Right ventricle myocardium superior (tissue), 1 donor: ENCODE measurements at regions of chr1 and their contacts with region 1.

Region 1: GRCh38 chr1:201481761-201482493 is 12.9 kb upstream of the PHLDA3 start:
- DNase-seq: peak; percentile 89
- ATAC-seq: peak; percentile 91

Region 2: DNA sequence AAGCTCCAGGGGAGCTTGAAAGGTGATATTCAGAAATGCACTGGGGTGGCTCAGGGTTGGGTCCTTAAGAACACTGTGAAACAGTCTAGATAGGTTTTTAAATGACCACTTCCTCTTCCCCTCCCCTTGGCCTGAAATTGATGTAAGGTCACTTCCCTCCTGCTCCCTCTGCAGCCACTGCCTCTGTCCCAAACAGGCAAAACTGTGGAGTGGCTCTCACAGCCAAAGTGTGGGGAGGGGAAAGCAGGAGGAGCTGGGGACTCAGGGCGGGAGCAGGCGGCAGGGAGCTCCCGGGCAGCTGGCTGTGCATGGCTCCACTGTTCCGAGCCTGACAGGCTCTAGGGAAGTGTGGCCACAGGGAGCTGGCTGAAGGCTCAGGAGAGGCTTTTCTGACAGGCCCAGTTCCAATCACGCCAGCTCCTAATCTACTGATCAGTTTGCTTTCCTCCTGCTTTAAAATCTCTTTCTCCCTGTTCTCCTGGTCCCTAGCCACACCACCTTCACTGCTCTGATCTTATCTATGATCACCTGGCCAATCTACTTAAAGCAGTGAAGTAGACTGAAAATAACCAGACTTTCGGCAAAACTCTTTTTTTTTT is 30.1 kb after region 1 on chr1:
- intact Hi-C with region 1: loop called (anchors 1 kb)
- DNase-seq: peak; percentile 82
- ATAC-seq: peak; percentile 82